Psoas muscle (tissue), 8 donors: ENCODE measurements at regions of chr2 and their contacts with region 1.

Region 1: DNA sequence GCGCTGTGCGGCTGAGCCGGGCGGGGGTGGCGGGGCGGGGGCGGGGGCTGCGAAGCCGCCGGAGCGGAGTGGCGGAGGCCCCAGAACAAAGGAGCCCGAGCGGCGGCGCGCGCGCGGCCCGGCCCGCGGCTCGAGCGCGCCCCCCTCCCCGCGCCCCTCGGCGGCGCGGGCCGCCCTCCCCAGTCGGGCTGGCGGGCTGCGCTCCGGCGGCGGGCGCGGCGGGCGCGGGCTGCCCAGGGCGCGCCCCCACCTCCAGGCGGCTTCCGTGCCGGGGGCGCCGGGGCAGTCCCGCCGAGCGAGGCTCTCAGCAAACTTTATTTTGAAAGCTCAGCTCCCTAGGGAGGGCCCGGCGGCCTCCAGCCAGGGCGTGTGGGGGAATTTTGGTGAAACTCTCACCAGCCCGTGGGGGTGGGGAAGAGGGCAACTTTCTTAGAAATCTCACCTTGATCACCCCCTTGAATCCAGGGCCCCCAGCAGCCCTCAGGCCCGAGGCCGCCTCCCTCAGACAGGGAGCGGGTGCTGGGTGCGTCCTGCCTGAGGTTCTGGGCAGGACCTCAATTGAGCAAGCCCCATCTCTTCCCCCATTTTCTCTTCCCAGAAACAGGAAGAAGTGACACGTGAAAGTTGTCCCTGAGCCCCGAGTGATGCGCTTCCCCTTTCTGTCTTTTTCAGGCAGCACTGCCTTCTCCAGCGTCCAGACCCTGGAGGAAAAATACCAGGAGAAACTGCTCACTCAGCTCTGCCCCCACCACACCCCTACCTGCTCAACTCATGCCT is 786 bp downstream of the TET3 start:
- DNase-seq: peak; percentile 63 to 75
- ATAC-seq: no peak
- H3K4me3 ChIP-seq: peak overlapping the region; percentile 78
- H3K27ac ChIP-seq: peak overlapping the region; percentile 46
- H3K4me1 ChIP-seq: peaks cover 56% of the 10 kb centered on the region
- H3K27me3 ChIP-seq: peaks cover 0 to under 1% (median 0%) of the 10 kb centered on the region in 3 donors
- CTCF ChIP-seq: no peak

Region 2: GRCh38 chr2:73926493-73927338 is 58.8 kb before region 1 on chr2 and contains the start of gene DGUOK:
- intact Hi-C with region 1: loop called in 1 of 2 experiments (anchors 5 kb)
- DNase-seq: peak; percentile 97 to 98
- ATAC-seq: peak; percentile 100
- H3K4me3 ChIP-seq: peak within 1 kb of the TSS; percentile 94
- H3K27ac ChIP-seq: peak within 1 kb of the TSS; percentile 94
- H3K4me1 ChIP-seq: peaks cover 21% of the 10 kb centered on the region
- H3K27me3 ChIP-seq: no peaks in the 10 kb centered on the region
- CTCF ChIP-seq: no peak
- total RNA-seq, gene DGUOK: 12.9 to 22.9 (median 20.7) TPM